Motor neuron (in vitro differentiated cells): ENCODE measurements at regions of chr10 and their contacts with region 1.

Region 1: GRCh38 chr10:21732067-21732772 is 198.2 kb downstream of the MLLT10 start:
- ATAC-seq: peak; percentile 48 to 99 (median 92)
- H3K4me3 ChIP-seq: no peak overlapping the region
- H3K27ac ChIP-seq: no peak overlapping the region
- H3K4me1 ChIP-seq: peaks cover 8 to 10% of the 10 kb centered on the region in 2 donors

Region 2: DNA sequence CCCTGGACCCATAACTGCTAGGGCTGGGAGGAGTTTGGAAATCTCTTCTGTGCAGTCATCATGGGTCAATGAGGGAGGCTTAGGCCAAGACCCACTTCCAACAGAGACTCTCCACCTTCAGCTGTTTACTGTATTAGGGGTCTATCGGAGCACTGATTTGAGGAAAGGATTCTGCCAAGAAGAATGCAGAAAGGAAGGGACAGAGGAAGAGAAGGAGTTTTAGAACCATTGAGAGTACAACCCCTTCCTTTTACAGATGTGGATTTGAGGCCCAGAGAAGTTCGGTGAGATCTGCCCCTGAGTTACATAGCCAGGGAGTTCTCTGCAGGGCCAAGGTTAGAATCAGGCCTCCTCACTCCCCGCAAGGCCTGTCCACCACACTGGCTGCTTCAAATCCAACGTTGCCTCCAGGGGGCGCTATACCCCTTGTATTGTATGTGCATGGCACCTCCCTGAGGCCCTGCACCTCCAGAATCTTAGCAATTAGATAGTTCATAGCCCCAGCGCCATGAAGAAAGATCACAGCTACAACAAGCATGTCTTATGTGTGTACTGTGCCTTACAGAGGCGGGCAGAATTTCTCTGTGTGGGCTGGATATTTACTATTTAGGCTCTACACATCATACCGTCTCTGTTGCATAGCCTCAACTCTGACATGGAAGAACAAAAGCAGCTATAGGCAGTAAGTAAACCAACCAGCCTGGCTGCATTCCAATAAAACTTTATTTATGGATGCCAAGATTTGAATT is 453.6 kb before region 1 on chr10:
- in situ Hi-C with region 1: loop called in 1 of 9 experiments (anchors 25 kb)
- ATAC-seq: peak; percentile 83 to 99 (median 98)
- H3K4me3 ChIP-seq: no peak overlapping the region
- H3K27ac ChIP-seq: no peak overlapping the region
- H3K4me1 ChIP-seq: peaks cover 10% of the 10 kb centered on the region in 2 donors

Region 3: DNA sequence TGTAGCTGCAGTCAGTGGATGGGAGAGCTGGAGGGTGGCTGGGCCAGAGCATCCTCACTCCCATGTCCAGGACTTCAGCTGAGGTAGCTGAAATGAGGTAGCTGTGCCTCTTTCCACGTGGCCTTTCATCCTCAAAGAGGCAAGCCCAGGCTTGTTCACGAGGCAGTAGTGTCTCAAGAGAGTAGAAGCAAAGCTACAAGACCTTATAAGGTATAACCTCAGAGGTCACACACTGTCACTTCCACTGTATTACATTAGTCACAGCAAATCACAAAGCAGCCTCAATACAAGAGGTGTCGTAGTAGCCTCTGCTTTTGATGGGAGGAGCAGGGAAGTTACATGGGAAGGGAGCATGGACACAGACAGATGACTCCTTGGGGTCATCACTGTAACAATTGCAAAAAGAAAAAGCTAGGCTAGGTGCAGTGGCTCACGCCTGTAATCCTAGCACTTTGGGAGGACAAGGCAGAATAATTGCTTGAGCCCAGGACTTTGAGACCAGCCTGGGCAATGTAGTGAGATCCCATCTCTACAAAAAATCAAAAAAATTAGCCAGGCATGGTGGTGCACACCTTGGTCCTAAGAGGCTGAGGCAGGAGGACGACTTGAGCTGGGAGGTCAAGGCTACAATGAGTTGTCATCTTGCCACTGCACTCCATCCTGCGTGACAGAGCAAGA is 304.3 kb before region 1 on chr10:
- in situ Hi-C with region 1: no loop called
- ATAC-seq: peak in 2 of 8 experiments; percentile 36 to 54
- H3K4me3 ChIP-seq: no peak overlapping the region
- H3K27ac ChIP-seq: no peak overlapping the region
- H3K4me1 ChIP-seq: no peaks in the 10 kb centered on the region

Region 4: GRCh38 chr10:21533467-21534279 is 198.5 kb before region 1 on chr10 and contains the start of gene MLLT10:
- in situ Hi-C with region 1: loop called in 1 of 9 experiments (anchors 25 kb)
- ATAC-seq: peak; percentile 73 to 89 (median 85)
- H3K4me3 ChIP-seq: peak within 1 kb of the TSS; percentile 62 to 89 (median 70)
- H3K27ac ChIP-seq: peak within 1 kb of the TSS; percentile 90
- H3K4me1 ChIP-seq: peaks cover 8 to 23% of the 10 kb centered on the region in 2 donors
- total RNA-seq, gene MLLT10: 19.0 to 59.6 (median 34.1) TPM

Region 5: GRCh38 chr10:21831986-21832820 is 100.0 kb after region 1 on chr10:
- in situ Hi-C with region 1: no loop called
- ATAC-seq: no peak
- H3K4me3 ChIP-seq: no peak overlapping the region
- H3K27ac ChIP-seq: no peak overlapping the region
- H3K4me1 ChIP-seq: no peaks in the 10 kb centered on the region

Region 6: GRCh38 chr10:21912625-21913024 is 180.4 kb after region 1 on chr10:
- in situ Hi-C with region 1: no loop called
- ATAC-seq: peak in 3 of 8 experiments; percentile 39 to 97 (median 78)
- H3K4me3 ChIP-seq: no peak overlapping the region
- H3K27ac ChIP-seq: no peak overlapping the region
- H3K4me1 ChIP-seq: no peaks in the 10 kb centered on the region